CD4-positive, alpha-beta T cell (primary cell): ENCODE measurements at regions of chr10 and their contacts with region 1.

Region 1: DNA sequence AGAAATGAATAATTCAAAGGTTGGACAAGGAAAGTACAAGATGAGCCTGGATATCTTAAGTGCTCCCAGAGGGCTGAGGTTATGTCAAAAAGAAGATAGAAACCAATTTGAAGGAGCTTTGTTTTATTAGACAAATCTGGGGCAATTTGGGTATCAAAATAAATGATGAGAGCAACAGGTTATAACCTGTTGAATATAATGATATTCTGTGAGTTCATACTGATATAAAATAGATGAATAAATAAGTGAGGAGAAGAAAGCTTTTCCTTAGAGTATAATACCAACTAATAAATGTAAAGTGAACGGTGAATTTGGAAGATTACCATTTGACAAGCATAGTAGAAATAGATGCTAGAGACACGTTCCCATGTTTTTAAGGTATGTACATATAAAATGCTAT is 544.2 kb upstream of the ANKRD30A start:
- DNase-seq: no peak
- ATAC-seq: no peak
- H3K4me3 ChIP-seq: no peak overlapping the region
- H3K4me3 Mint-ChIP-seq: no peak overlapping the region
- H3K27ac ChIP-seq: no peak overlapping the region
- H3K27ac Mint-ChIP-seq: no peak overlapping the region
- H3K4me1 ChIP-seq: no peaks in the 10 kb centered on the region
- H3K4me1 Mint-ChIP-seq: no peaks in the 10 kb centered on the region
- H3K27me3 ChIP-seq: no peaks in the 10 kb centered on the region
- H3K27me3 Mint-ChIP-seq: no peaks in the 10 kb centered on the region
- CTCF ChIP-seq: no peak

Region 2: DNA sequence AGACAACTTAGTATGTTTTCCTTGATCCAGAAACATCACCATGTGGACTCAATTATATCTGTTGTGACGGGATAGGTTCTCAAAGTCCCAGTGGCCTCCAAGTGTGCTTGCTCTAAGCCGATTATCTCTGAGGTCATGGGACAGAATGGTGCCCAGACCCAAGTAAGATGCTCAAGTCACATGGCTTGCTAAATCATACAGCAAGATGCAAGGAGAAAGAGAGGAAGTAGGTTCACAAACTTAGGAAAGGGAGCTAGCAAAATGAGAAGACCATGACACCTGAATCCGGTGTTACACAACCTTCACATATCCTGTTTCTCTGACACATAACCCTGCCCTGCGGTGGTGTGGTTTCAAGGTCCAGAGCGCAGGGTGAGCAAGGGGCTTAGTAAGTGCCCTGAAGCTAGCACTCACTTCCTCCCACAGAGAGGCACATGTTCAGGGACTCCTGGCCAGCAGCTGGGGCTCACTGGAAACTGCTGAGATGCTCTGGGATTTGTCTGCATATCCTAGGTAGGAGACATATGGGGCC is 46.7 kb before region 1 on chr10:
- CTCF ChIA-PET with region 1: no interaction called
- POLR2A ChIA-PET with region 1: no interaction called
- intact Hi-C with region 1: loop called in 1 of 2 experiments (anchors 10 kb)
- DNase-seq: peak in 3 of 14 experiments; percentile 4 to 17 (median 11)
- ATAC-seq: no peak
- H3K4me3 ChIP-seq: no peak overlapping the region
- H3K4me3 Mint-ChIP-seq: no peak overlapping the region
- H3K27ac ChIP-seq: no peak overlapping the region
- H3K27ac Mint-ChIP-seq: no peak overlapping the region
- H3K4me1 ChIP-seq: no peaks in the 10 kb centered on the region
- H3K4me1 Mint-ChIP-seq: no peaks in the 10 kb centered on the region
- H3K27me3 ChIP-seq: no peaks in the 10 kb centered on the region
- H3K27me3 Mint-ChIP-seq: no peaks in the 10 kb centered on the region
- CTCF ChIP-seq: no peak